ENCODE measurements at regions of chr15 and their contacts with region 1.

Region 1: GRCh38 chr15:33729653-33730052 is 238.6 kb upstream of the CHRM5 start:
- DNase-seq: no peak
- H3K4me3 ChIP-seq: no peak overlapping the region
- CTCF ChIP-seq: peak; percentile 30

Region 2: DNA sequence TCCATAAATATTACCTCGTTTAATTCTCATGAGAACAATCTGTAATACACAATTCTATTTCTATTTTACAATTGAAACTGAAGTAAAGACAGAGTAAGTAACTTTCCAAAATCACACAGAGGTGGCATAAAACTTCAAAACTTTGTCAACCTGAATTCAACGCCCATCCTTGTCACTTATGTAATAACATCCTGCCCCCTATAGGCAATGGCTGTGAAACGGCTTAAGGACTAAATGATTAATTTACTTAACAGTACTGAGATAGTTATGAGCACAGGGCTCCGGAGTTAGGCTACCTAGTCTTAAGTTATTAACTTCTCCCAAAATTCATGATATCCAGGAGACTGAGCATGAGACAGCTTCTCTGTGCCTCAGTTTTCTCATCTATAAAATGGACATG is 54.4 kb before region 1 on chr15:
- in situ Hi-C with region 1: loop called (anchors 5 kb)
- DNase-seq: peak; percentile 13
- H3K4me3 ChIP-seq: no peak overlapping the region
- CTCF ChIP-seq: peak; percentile 55

Region 3: DNA sequence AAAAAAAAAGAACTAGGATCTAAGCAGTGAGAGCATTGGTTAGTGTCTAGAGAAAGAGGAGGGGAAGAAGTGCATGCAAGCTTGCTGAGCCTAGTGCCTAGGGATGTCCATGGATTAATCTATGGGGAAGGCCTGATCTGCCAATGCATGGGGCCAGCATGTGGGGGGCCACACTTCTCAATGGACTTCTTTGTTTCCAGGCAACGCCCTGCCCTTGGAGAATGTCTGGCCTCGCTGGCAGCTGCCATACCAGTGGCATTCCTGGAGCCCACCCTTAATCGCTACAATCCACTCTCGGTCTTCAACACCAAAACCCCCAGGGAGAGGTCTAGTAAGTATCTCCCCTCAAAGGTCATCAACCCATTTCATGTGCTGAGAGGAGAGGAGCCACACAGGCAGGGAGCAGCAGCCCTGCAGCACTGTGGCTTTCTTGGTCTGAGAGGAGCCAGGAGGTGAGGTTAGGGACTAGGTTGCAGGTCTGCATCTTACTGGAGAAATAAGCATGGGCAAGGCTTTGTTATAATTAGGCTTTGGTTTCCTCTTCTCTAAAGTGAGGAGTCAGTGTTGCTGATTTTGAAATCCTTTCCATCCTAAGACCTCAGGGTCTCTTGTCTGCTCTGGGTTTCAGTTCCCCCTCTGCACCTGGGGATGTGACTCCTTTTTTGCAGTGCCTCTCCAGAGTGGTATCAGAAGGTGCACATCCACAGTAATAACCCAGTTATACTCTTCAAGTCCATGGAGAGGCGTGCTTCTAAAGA is 50.5 kb after region 1 on chr15:
- in situ Hi-C with region 1: no loop called
- DNase-seq: no peak
- H3K4me3 ChIP-seq: no peak overlapping the region
- CTCF ChIP-seq: no peak

Measured in astrocyte of the cerebellum (primary cell).